ENCODE measurements at regions of chr18 and their contacts with region 1.

Region 1: GRCh38 chr18:63439334-63439733 is 17.1 kb upstream of the VPS4B start:
- DNase-seq: peak; percentile 85
- H3K4me3 Mint-ChIP-seq: no peak overlapping the region
- H3K27ac Mint-ChIP-seq: no peak overlapping the region
- H3K4me1 Mint-ChIP-seq: no peaks in the 10 kb centered on the region
- H3K27me3 Mint-ChIP-seq: peaks cover 29% of the 10 kb centered on the region

Region 2: GRCh38 chr18:63299837-63300745 is 139.2 kb before region 1 on chr18:
- intact Hi-C with region 1: no loop called
- DNase-seq: peak; percentile 81
- H3K4me3 Mint-ChIP-seq: peak overlapping the region; percentile 81
- H3K27ac Mint-ChIP-seq: peak overlapping the region; percentile 98
- H3K4me1 Mint-ChIP-seq: peaks cover 81% of the 10 kb centered on the region
- H3K27me3 Mint-ChIP-seq: no peaks in the 10 kb centered on the region

Region 3: GRCh38 chr18:63339920-63340484 is 99.3 kb before region 1 on chr18:
- intact Hi-C with region 1: loop called (anchors 1 kb)
- DNase-seq: peak; percentile 81
- H3K4me3 Mint-ChIP-seq: no peak overlapping the region
- H3K27ac Mint-ChIP-seq: peak overlapping the region; percentile 2
- H3K4me1 Mint-ChIP-seq: peaks cover 11% of the 10 kb centered on the region
- H3K27me3 Mint-ChIP-seq: no peaks in the 10 kb centered on the region

Region 4: DNA sequence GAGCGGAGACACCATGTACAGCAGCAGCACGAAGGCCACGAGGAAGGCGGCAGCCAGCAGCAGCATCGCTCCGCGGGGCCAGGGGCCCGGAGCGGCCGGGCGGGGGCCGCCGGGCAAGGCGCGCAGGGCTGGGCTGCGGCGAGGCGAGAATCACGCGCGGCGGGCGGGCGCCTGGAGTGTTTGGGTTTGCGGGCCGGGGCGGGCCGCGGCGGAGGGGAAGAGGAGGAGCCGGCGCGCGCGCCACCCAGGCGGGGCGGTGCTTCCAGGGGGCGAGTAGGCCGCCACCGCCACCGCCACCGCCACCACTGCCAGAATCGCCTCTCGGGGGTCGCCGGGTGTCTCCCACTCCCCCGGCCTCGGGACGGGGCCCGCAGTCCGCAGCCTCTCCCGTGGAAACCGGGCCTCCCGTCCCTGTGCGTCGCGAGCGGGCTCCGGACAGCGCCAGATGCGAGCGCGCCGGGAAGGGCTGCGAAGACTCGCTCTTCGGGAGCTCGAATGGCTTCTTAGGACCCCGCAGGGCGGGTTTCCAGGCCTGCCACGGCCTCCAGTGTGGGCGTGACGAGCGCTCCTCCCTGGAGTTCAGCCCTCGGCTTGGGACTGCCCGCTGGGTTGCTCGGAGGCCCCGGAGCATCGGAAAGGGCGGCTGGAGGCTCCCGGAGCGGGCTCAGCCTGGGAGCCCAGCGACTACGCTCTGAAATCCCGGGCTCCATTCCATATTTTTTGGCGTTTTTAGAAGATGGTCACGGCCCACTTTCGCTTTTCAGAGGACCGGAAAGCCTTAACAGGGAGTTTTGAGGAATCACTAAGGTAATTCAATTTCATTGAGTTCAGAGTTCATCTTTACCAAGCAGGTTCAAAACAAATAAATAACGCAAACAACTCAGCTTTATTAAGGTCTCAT is 72.0 kb before region 1 on chr18 and contains the start of gene KDSR:
- intact Hi-C with region 1: loop called (anchors 2 kb)
- DNase-seq: peak; percentile 96
- H3K4me3 Mint-ChIP-seq: peak within 1 kb of the TSS; percentile 91
- H3K27ac Mint-ChIP-seq: peak within 1 kb of the TSS; percentile 81
- H3K4me1 Mint-ChIP-seq: peaks cover 29% of the 10 kb centered on the region
- H3K27me3 Mint-ChIP-seq: no peaks in the 10 kb centered on the region
- total RNA-seq, gene KDSR: 83.9 and 86.9 TPM in 2 replicates

Region 5: GRCh38 chr18:63410792-63411191 is 28.5 kb before region 1 on chr18:
- intact Hi-C with region 1: no loop called
- DNase-seq: no peak
- H3K4me3 Mint-ChIP-seq: peak overlapping the region; percentile 9
- H3K27ac Mint-ChIP-seq: peak overlapping the region; percentile 48
- H3K4me1 Mint-ChIP-seq: peaks cover 45% of the 10 kb centered on the region
- H3K27me3 Mint-ChIP-seq: no peaks in the 10 kb centered on the region

Measured in activated CD4-positive, alpha-beta T cell treated with anti-CD3 and anti-CD28 coated beads, Interleukin-2, amount 10 ng/mL, durations not matched to agents 24 days and 14 days (primary cell).